ENCODE measurements at regions of chr4 and their contacts with region 1.

Region 1: DNA sequence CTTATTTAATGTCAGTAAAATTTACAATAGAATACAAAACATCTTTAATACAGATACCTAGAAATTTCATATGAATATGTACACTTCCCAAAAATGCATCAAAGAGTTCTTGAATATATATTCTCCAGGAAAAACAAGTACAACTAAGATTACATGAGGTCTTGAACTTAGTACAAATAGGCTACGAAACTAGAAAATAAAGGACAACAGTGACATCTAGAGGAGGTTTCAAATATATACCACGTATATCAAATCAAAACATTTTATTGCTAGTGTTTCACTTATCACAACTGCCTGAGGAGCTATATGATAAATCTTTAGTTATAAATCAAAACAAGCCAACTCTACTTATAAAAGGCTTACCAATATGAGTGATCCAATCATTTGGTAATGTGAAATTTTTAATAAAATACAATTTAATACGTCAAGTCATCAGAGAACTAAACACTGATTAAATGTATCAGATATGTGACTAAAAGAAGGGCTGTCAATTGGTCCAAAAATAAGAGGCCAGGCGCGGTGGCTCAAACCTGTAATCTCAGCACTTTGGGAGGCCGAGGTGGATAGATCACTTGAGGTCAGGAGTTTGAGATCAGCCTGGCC is 36.6 kb downstream of the ANAPC10 start:
- DNase-seq: peak; percentile 24
- H3K4me3 ChIP-seq: no peak overlapping the region
- H3K27ac ChIP-seq: no peak overlapping the region
- H3K4me1 ChIP-seq: peaks cover 0 to 21% of the 10 kb centered on the region in 2 experiments; a peak in 2 of 4 replicates
- H3K27me3 ChIP-seq: no peaks in the 10 kb centered on the region
- CTCF ChIP-seq: peak; percentile 68
- EP300 ChIP-seq: no peak
- RAD21 ChIP-seq: peak; percentile 64

Region 2: GRCh38 chr4:145048817-145049216 is 12.6 kb before region 1 on chr4:
- CTCF ChIA-PET with region 1: interaction called, 10 read pairs
- POLR2A ChIA-PET with region 1: no interaction called
- DNase-seq: no peak
- H3K4me3 ChIP-seq: no peak overlapping the region
- H3K27ac ChIP-seq: no peak overlapping the region
- H3K4me1 ChIP-seq: peaks cover 0 to 13% of the 10 kb centered on the region in 2 experiments; a peak in 1 of 4 replicates
- H3K27me3 ChIP-seq: no peaks in the 10 kb centered on the region
- CTCF ChIP-seq: no peak
- EP300 ChIP-seq: no peak
- RAD21 ChIP-seq: no peak

Measured in SK-N-SH (cell line).